GM10248 (cell line): ENCODE measurements at regions of chr17 and their contacts with region 1.

Region 1: DNA sequence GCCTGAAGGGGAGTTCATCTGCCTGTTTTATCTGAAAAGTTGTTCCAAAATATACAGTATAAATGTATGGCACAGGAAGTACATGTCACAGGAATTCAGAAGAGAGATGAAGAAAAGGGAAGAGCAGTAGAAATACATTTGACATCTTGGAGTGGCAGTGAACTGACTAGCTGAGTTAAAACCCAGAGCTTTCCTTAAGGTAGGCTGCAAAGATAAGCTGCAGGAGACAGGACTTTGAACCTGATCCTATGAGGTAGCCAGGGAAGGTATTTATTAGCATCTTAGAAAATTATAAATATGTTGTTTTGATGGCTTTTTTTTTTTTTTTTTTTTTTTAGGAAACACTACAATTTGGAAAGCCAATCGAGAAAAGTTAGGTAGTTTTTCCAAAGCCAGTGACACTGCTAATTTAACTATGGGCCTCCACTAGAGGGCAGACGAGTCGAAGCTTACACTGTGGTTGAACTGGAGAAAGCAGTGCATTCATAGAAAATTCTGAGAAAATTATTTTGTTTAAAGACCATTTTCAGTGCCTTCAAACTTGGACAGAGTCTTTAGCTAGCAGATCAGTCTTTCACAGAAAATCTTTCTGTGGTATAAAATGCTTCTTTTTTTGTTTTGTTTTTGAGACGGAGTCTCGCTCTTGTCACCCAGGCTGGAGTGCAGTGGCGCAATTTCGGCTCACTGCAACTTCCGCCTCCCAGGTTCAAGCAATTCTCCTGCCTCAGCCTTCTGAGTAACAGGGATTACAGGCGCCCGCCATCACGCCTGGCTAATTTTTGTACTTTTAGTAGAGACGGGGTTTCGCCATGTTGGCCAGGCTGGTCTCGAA is 122.3 kb downstream of the SSH2 start:
- DNase-seq: peak; percentile 68
- CTCF ChIP-seq: peak; percentile 79

Region 2: DNA sequence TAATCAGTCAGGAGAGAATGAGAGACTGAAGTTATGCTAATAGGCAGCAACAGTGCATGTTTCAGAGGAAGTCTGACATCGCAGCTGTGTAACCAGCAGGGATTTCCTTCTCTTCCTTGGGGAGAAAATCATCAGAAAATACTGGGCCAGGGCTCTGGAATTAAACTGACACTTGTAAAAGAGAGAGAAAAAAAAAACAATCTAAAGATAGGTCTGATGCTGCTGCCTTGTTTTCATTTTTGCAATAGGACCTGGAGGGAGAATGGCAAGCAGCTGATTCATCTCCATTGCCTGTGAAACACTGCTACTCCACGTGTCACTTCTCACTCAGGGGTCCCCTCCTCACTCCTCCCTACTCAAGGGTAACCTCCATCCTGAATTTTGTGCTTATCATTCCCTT is 167.3 kb before region 1 on chr17:
- CTCF ChIA-PET with region 1: interaction called, 16 read pairs
- POLR2A ChIA-PET with region 1: no interaction called
- DNase-seq: no peak
- CTCF ChIP-seq: no peak

Region 3: DNA sequence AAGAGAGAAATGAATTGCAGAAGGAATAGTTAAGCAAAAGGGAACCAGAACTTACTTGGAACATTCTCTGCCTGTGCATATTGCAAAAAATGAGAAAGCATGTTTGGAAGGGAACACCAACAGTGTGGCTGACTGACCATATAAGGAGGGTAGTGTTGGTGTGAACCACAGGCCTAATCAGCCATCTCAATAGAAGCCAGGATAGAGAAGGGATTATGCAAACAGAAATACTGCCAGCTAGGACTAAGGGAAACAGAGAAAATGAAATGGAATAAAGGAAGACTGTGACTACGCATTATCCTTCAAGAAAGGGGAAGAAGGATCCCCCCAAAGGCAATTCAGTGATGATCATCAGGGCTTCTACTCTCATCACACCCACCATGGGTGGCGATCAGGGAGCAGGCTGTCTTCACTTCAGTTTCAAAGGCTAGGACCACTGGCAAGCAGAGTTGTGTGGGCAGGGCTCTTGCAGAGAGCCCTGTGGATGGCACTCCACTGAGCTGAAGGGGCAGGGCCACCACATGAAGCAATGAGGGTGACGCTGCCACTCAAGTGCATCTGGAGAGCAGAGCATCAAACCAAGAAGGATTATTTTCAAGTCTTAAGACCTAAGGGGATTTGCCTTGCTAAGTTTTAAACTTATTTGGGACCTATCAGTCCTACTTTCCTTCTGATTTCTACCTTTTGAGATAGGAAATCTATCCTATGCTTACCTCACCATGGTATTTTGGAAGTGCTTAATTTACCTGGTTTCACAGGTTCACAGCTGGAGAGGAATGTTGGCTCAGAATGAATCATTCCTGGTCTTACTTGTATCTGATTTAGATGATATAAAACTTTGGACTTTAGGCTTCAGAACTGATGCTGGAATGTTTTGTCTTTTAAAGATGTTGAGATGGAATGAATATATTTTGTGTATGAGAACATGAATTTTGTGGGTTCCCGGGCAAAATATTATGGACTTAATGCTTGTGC is 18.3 kb before region 1 on chr17:
- CTCF ChIA-PET with region 1: interaction called, 13 read pairs
- POLR2A ChIA-PET with region 1: no interaction called
- DNase-seq: no peak
- CTCF ChIP-seq: no peak

Region 4: GRCh38 chr17:29821897-29822296 is 14.2 kb after region 1 on chr17:
- CTCF ChIA-PET with region 1: interaction called, 17 read pairs
- POLR2A ChIA-PET with region 1: no interaction called
- DNase-seq: no peak
- CTCF ChIP-seq: no peak

Region 5: GRCh38 chr17:29828676-29829284 is 21.0 kb after region 1 on chr17:
- CTCF ChIA-PET with region 1: interaction called, 12 read pairs
- POLR2A ChIA-PET with region 1: no interaction called
- DNase-seq: no peak
- CTCF ChIP-seq: no peak

Region 6: GRCh38 chr17:30021708-30022317 is 214.1 kb after region 1 on chr17:
- CTCF ChIA-PET with region 1: interaction called, 10 read pairs
- POLR2A ChIA-PET with region 1: no interaction called
- DNase-seq: peak; percentile 45
- CTCF ChIP-seq: peak; percentile 67

Region 7: GRCh38 chr17:30093463-30094147 is 285.9 kb after region 1 on chr17:
- CTCF ChIA-PET with region 1: interaction called, 40 read pairs
- POLR2A ChIA-PET with region 1: no interaction called
- DNase-seq: peak; percentile 72
- CTCF ChIP-seq: peak; percentile 79